Activated CD4-positive, alpha-beta T cell treated with anti-CD3 and anti-CD28 coated beads for 36 hours (primary cell): ENCODE measurements at regions of chr7 and their contacts with region 1.

Region 1: DNA sequence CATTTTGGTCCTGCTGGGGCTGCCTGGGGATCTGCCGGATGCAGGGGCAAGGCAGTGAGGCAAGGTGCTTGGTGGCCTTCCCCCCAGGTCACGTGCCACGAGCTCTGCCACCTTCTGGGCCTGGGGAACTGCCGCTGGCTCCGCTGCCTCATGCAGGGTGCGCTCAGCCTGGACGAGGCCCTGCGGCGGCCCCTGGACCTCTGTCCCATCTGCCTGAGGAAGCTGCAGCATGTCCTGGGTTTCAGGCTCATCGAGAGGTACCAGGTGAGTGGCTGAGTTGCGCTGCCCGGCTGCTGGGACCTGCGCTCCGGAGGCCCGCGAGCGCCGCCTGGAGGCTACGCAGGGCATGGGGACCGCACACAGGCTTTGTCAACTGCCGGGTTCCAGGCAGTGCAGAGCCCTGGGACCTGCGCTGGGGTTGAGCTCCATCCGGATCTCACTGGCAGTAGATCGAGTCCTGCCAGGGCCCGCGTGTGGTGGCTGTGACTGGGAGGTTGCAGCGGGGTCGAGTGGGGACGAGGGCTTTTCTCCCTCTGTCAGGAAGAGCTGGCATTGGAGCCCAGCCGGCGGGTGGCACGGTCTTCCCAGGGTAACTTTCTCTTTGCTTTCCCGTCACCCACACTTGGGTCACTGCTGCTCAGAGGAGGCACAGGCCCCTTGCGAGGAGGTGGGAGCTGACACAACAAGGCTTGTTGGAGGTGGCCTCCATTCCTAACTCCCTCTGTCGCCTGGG is 21.7 kb downstream of the AMZ1 start:
- DNase-seq: peak; percentile 90
- ATAC-seq: peak; percentile 93
- H3K4me3 Mint-ChIP-seq: peak overlapping the region; percentile 55
- H3K27ac Mint-ChIP-seq: peak overlapping the region; percentile 47
- H3K4me1 Mint-ChIP-seq: peaks cover 27% of the 10 kb centered on the region
- H3K27me3 Mint-ChIP-seq: no peaks in the 10 kb centered on the region

Region 2: GRCh38 chr7:2203766-2204300 is 505.9 kb before region 1 on chr7:
- CTCF ChIA-PET with region 1: no interaction called
- POLR2A ChIA-PET with region 1: no interaction called
- intact Hi-C with region 1: no loop called
- DNase-seq: no peak
- ATAC-seq: no peak
- H3K4me3 Mint-ChIP-seq: no peak overlapping the region
- H3K27ac Mint-ChIP-seq: no peak overlapping the region
- H3K4me1 Mint-ChIP-seq: no peaks in the 10 kb centered on the region
- H3K27me3 Mint-ChIP-seq: no peaks in the 10 kb centered on the region

Region 3: DNA sequence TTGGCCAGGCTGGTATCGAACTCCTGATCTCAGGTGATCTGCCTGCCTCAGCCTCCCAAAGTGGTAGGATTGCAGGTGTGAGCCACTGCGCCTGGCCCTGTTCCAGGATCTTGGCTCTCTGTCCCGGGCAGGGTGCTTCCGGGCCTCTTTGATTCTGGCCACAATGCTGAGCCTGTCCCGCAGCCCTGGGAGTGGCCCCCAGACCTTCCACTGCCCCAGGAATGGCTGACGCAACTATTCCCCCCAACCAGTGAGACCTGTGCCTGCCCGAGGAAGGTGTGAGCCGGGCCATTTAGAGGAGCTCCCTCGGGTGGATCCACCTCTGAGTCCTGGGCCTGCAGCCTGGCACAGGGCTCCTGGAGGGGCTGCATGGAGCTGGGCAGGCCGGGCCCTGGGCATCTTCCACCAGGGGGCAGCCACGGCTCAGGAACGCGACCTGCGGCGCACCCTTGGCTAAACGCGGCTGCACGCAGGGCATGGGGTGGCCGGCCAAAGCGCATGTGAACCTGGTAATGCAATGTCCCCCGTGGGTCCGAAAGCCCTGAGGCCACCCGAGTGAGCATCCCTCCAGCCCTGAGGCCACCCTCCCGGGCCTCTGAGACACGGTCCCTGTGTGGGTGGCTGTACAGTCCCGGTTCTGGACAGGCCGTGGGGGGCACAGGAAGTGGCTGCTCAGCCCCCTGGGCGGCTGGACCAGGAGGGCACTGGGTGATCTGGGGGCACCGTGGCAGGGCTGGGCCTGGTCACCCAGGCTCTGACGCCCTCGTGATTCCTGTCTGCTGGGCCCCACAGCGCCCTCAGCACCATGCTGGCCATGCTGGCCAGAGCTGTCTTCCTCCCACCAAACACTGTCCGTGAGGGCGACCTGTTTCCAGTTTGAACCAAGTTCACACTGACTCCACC is 258.3 kb before region 1 on chr7:
- CTCF ChIA-PET with region 1: interaction called, 13 read pairs
- POLR2A ChIA-PET with region 1: no interaction called
- intact Hi-C with region 1: loop called in 1 of 2 experiments (anchors 1 kb)
- DNase-seq: peak; percentile 91
- ATAC-seq: peak; percentile 98
- H3K4me3 Mint-ChIP-seq: no peak overlapping the region
- H3K27ac Mint-ChIP-seq: no peak overlapping the region
- H3K4me1 Mint-ChIP-seq: peaks cover 4% of the 10 kb centered on the region
- H3K27me3 Mint-ChIP-seq: no peaks in the 10 kb centered on the region

Region 4: GRCh38 chr7:2670720-2671391 is 38.9 kb before region 1 on chr7:
- CTCF ChIA-PET with region 1: interaction called, 30 read pairs
- POLR2A ChIA-PET with region 1: no interaction called
- intact Hi-C with region 1: loop called (anchors 1 kb)
- DNase-seq: peak; percentile 88
- ATAC-seq: peak; percentile 95
- H3K4me3 Mint-ChIP-seq: no peak overlapping the region
- H3K27ac Mint-ChIP-seq: no peak overlapping the region
- H3K4me1 Mint-ChIP-seq: peaks cover 6% of the 10 kb centered on the region
- H3K27me3 Mint-ChIP-seq: peaks cover 12% of the 10 kb centered on the region

Region 5: GRCh38 chr7:2680792-2681490 is 28.8 kb before region 1 on chr7:
- CTCF ChIA-PET with region 1: interaction called, 9 read pairs
- POLR2A ChIA-PET with region 1: interaction called, 13 read pairs
- intact Hi-C with region 1: no loop called
- DNase-seq: peak; percentile 79
- ATAC-seq: peak; percentile 73
- H3K4me3 Mint-ChIP-seq: no peak overlapping the region
- H3K27ac Mint-ChIP-seq: no peak overlapping the region
- H3K4me1 Mint-ChIP-seq: no peaks in the 10 kb centered on the region
- H3K27me3 Mint-ChIP-seq: peaks cover 2% of the 10 kb centered on the region

Region 6: GRCh38 chr7:2689951-2690705 is 19.6 kb before region 1 on chr7:
- CTCF ChIA-PET with region 1: interaction called, 33 read pairs
- POLR2A ChIA-PET with region 1: no interaction called
- intact Hi-C with region 1: no loop called
- DNase-seq: no peak
- ATAC-seq: no peak
- H3K4me3 Mint-ChIP-seq: no peak overlapping the region
- H3K27ac Mint-ChIP-seq: no peak overlapping the region
- H3K4me1 Mint-ChIP-seq: peaks cover 8% of the 10 kb centered on the region
- H3K27me3 Mint-ChIP-seq: peaks cover 31% of the 10 kb centered on the region

Region 7: GRCh38 chr7:2698581-2699288 is 11.0 kb before region 1 on chr7:
- CTCF ChIA-PET with region 1: interaction called, 42 read pairs
- POLR2A ChIA-PET with region 1: interaction called, 3 read pairs
- intact Hi-C with region 1: no loop called
- DNase-seq: peak; percentile 76
- ATAC-seq: peak; percentile 94
- H3K4me3 Mint-ChIP-seq: peak overlapping the region; percentile 47
- H3K27ac Mint-ChIP-seq: no peak overlapping the region
- H3K4me1 Mint-ChIP-seq: peaks cover 20% of the 10 kb centered on the region
- H3K27me3 Mint-ChIP-seq: no peaks in the 10 kb centered on the region

Region 8: GRCh38 chr7:2720582-2721491 is 11.1 kb after region 1 on chr7:
- CTCF ChIA-PET with region 1: interaction called, 35 read pairs
- POLR2A ChIA-PET with region 1: no interaction called
- intact Hi-C with region 1: no loop called
- DNase-seq: peak; percentile 95
- ATAC-seq: peak; percentile 86
- H3K4me3 Mint-ChIP-seq: no peak overlapping the region
- H3K27ac Mint-ChIP-seq: peak overlapping the region; percentile 32
- H3K4me1 Mint-ChIP-seq: peaks cover 49% of the 10 kb centered on the region
- H3K27me3 Mint-ChIP-seq: no peaks in the 10 kb centered on the region